Posterior cingulate gyrus (tissue), 11 donors: ENCODE measurements at regions of chr7 and their contacts with region 1.

Region 1: DNA sequence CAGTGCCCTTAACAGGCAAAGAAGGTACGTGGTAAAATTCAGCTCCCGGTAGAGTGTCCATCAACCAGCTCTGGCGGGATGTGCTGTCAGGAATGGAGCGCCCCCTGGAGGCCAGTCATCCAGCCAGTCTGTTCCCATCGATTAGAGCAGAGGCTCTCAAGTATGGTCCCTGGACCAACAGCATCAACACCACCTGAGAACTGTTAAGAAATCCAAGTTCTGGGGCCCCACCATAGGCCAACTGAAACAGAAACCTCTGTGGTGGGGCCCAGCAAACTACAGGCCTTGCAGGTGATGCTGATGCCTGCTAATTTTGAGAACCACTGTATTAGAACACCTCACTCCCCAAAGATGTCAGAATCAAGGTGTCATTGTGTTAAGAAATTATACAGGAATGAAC is 109.2 kb downstream of the DPY19L1 start:
- DNase-seq: peak; percentile 34 to 95 (median 83)

Region 2: GRCh38 chr7:34734771-34735170 is 193.3 kb before region 1 on chr7:
- intact Hi-C with region 1: no loop called
- DNase-seq: no peak

Region 3: DNA sequence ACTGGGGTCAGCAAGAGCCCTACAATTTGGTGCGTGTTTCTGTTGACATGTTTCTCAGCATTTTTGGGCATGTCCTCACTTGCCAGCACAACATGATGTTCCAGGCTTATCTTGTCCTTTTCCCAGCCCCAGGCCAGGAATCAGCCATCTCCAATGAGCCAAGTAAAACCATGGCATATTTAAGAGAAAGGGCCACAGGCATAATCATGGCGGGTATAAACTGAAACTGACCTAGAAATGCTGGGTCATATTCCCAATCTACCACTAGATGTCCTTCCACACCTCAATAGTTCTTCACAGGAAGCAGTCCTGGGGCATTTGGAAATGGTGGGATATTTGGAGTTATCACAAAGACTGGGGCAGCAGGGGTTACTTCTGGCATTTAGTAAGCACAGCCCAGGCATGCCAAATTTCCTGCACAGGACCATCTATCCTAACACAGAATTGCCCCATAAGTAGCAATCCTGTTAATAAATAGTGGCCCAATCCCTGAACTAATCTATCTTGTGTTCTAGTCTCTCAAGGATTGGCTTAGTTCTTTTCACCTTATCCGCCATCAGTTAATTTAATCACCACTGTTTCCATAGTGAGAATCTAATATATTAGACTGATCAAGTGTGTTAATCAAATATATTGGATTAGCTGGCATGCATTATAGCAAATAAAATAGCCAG is 168.5 kb before region 1 on chr7:
- intact Hi-C with region 1: loop called (anchors 1 kb)
- DNase-seq: no peak

Region 4: DNA sequence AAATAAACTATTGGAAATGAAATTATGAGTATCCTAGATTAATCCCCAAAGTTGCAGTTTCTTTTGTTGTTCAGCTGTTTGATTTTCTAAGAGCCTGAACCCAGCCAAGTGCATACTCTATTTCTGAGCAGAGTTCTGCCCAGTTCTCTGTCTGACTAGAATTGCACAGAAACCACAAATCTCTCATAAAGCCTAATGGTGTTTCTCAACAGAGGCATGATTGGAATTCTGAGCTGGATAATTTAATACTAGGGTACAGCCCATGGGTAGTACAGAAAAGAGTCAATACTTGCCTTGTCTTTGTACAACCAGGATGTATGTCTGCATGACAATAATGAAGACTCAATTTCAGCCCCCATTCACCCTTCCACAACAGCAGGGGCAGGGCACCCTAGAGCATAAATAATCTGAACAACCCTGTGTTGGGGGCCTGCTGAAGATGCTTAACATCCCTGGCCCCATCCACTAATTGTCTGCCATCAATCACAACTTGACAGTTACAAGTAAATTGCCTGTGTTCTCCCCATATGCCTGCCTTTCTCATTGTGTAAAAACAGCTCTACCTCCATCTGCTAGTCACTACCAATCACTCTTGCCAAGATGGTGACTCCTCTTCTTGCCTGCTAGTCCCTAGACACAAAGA is 155.6 kb before region 1 on chr7:
- intact Hi-C with region 1: no loop called
- DNase-seq: no peak

Region 5: GRCh38 chr7:34823640-34824258 is 104.3 kb before region 1 on chr7:
- intact Hi-C with region 1: loop called (anchors 1 kb)
- DNase-seq: peak in 9 of 10 donors; percentile 37 to 90 (median 67)

Region 6: DNA sequence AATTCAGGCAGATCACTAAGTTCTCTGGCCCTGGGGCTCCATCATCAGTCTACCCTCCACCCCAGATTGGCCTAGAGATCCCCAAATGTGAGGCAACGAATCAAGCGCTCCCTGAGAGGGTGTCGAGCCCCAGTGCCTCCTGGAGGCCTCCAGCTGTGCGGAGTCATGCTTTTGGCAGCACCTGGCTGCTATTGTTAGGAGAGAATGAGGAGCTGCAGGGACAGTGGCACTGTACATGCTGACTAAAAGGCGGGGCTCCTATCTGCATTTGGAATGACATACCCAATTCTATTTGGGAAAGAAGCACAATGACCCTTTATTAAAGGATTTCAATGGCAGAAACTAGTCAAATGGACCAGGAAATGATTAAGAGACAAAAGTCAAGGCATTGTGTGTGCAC is 52.6 kb before region 1 on chr7:
- intact Hi-C with region 1: loop called (anchors 10 kb)
- DNase-seq: peak in 4 of 10 donors; percentile 17 to 85 (median 32)